Caco-2 (cell line): ENCODE measurements at regions of chr2 and their contacts with region 1.

Region 1: DNA sequence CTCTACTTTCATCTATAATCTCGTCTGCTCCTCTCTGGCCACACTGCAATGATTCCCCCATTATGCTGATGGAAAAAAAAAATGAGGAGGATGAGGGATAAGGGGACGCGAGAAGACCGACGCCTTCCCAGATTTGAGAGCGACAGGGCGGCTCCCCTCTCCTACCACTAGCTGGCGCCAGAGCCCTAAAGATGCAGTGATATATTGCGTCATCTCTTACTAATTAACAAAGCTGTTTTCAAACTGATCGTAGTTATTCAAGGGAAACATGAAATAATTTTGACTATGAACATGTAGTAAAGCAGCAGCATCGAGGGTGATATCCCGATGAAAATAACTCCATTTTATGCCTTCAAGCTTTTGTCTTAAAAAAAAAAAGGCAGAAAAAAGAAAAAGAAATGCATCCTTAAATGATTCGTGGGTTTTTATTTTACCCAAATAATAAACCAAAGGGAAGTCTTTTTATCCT is 48.0 kb upstream of the HNRNPA3 start:
- DNase-seq: peak; percentile 81 to 84
- H3K4me3 ChIP-seq: peak overlapping the region; percentile 22
- H3K4me3 Mint-ChIP-seq: no peak overlapping the region
- H3K27ac Mint-ChIP-seq: no peak overlapping the region
- H3K4me1 ChIP-seq: peaks cover 46% of the 10 kb centered on the region
- H3K4me1 Mint-ChIP-seq: peaks cover 22% of the 10 kb centered on the region
- H3K27me3 ChIP-seq: no peaks in the 10 kb centered on the region
- H3K27me3 Mint-ChIP-seq: peaks cover 4% of the 10 kb centered on the region
- CTCF ChIP-seq: peak; percentile 98 to 99

Region 2: GRCh38 chr2:176924909-176925534 is 239.6 kb before region 1 on chr2:
- CTCF ChIA-PET with region 1: no interaction called
- POLR2A ChIA-PET with region 1: no interaction called
- intact Hi-C with region 1: no loop called
- DNase-seq: no peak
- H3K4me3 ChIP-seq: no peak overlapping the region
- H3K4me3 Mint-ChIP-seq: no peak overlapping the region
- H3K27ac Mint-ChIP-seq: no peak overlapping the region
- H3K4me1 ChIP-seq: no peaks in the 10 kb centered on the region
- H3K4me1 Mint-ChIP-seq: no peaks in the 10 kb centered on the region
- H3K27me3 ChIP-seq: no peaks in the 10 kb centered on the region; the same call in 1 of the 2 replicates
- H3K27me3 Mint-ChIP-seq: peaks cover 9% of the 10 kb centered on the region
- CTCF ChIP-seq: no peak

Region 3: GRCh38 chr2:177124371-177124770 is 40.2 kb before region 1 on chr2:
- CTCF ChIA-PET with region 1: no interaction called
- POLR2A ChIA-PET with region 1: no interaction called
- intact Hi-C with region 1: no loop called
- DNase-seq: no peak
- H3K4me3 ChIP-seq: no peak overlapping the region
- H3K4me3 Mint-ChIP-seq: no peak overlapping the region
- H3K27ac Mint-ChIP-seq: no peak overlapping the region
- H3K4me1 ChIP-seq: no peaks in the 10 kb centered on the region
- H3K4me1 Mint-ChIP-seq: no peaks in the 10 kb centered on the region
- H3K27me3 ChIP-seq: no peaks in the 10 kb centered on the region; the same call in 1 of the 2 replicates
- H3K27me3 Mint-ChIP-seq: peaks cover 4% of the 10 kb centered on the region
- CTCF ChIP-seq: no peak

Region 4: DNA sequence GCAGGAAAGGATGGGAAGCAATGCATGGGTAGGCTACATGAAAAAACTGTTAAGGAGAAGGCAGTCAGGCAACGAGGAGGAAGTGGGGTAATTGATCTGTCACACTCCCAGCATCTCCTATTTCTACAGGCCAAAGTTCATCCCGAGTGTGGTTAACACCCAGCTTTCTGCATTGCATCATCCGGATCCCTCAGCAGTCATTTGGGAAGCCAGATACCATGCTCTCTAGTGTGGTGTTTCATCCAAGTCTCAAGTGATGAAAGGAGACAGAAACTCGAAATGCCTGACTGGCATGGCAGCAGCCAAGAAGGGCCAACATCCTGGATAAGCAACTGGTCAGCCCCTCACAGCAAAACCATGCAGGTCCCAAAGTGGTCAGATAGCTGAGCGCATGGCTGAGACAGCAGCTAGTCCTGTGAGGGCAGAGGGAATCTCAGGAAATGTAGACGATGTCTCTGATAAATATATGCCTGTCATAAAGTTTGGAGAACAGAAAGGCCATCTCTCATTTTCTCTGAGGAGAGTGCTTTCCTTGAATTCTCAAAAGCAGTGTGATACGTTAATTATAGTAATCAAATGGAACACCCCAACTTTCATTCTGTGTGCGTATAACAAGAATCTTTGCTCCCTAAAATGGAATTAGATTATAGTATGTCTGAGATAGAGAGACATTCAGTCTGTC is 23.2 kb after region 1 on chr2:
- CTCF ChIA-PET with region 1: interaction called, 6 read pairs
- POLR2A ChIA-PET with region 1: no interaction called
- intact Hi-C with region 1: loop called (anchors 1 kb)
- DNase-seq: peak; percentile 69 to 74
- H3K4me3 ChIP-seq: no peak overlapping the region
- H3K4me3 Mint-ChIP-seq: peak overlapping the region; percentile 23
- H3K27ac Mint-ChIP-seq: peak overlapping the region; percentile 75
- H3K4me1 ChIP-seq: peaks cover 35% of the 10 kb centered on the region
- H3K4me1 Mint-ChIP-seq: peaks cover 22% of the 10 kb centered on the region
- H3K27me3 ChIP-seq: no peaks in the 10 kb centered on the region
- H3K27me3 Mint-ChIP-seq: no peaks in the 10 kb centered on the region
- CTCF ChIP-seq: no peak

Region 5: GRCh38 chr2:177212106-177212890 is 47.7 kb after region 1 on chr2 and contains the start of gene HNRNPA3:
- CTCF ChIA-PET with region 1: interaction called, 4 read pairs
- POLR2A ChIA-PET with region 1: interaction called, 9 read pairs
- intact Hi-C with region 1: loop called (anchors 2 kb)
- DNase-seq: peak; percentile 99
- H3K4me3 ChIP-seq: peak within 1 kb of the TSS; percentile 72
- H3K4me3 Mint-ChIP-seq: peak within 1 kb of the TSS; percentile 87
- H3K27ac Mint-ChIP-seq: peak within 1 kb of the TSS; percentile 99
- H3K4me1 ChIP-seq: peaks cover 22% of the 10 kb centered on the region
- H3K4me1 Mint-ChIP-seq: peaks cover 8% of the 10 kb centered on the region
- H3K27me3 ChIP-seq: no peaks in the 10 kb centered on the region
- H3K27me3 Mint-ChIP-seq: no peaks in the 10 kb centered on the region
- CTCF ChIP-seq: peak in 1 of 2 experiments; percentile 37
- total RNA-seq, gene HNRNPA3: 322 and 332 TPM in 2 replicates

Region 6: GRCh38 chr2:177263451-177264208 is 99.0 kb after region 1 on chr2:
- CTCF ChIA-PET with region 1: interaction called, 44 read pairs
- POLR2A ChIA-PET with region 1: interaction called, 9 read pairs
- intact Hi-C with region 1: loop called (anchors 1 kb)
- DNase-seq: peak; percentile 98 to 99
- H3K4me3 ChIP-seq: peak overlapping the region; percentile 91
- H3K4me3 Mint-ChIP-seq: peak overlapping the region; percentile 97
- H3K27ac Mint-ChIP-seq: peak overlapping the region; percentile 91
- H3K4me1 ChIP-seq: peaks cover 40% of the 10 kb centered on the region
- H3K4me1 Mint-ChIP-seq: peaks cover 21% of the 10 kb centered on the region
- H3K27me3 ChIP-seq: no peaks in the 10 kb centered on the region
- H3K27me3 Mint-ChIP-seq: no peaks in the 10 kb centered on the region
- CTCF ChIP-seq: peak; percentile 83 to 95

Region 7: DNA sequence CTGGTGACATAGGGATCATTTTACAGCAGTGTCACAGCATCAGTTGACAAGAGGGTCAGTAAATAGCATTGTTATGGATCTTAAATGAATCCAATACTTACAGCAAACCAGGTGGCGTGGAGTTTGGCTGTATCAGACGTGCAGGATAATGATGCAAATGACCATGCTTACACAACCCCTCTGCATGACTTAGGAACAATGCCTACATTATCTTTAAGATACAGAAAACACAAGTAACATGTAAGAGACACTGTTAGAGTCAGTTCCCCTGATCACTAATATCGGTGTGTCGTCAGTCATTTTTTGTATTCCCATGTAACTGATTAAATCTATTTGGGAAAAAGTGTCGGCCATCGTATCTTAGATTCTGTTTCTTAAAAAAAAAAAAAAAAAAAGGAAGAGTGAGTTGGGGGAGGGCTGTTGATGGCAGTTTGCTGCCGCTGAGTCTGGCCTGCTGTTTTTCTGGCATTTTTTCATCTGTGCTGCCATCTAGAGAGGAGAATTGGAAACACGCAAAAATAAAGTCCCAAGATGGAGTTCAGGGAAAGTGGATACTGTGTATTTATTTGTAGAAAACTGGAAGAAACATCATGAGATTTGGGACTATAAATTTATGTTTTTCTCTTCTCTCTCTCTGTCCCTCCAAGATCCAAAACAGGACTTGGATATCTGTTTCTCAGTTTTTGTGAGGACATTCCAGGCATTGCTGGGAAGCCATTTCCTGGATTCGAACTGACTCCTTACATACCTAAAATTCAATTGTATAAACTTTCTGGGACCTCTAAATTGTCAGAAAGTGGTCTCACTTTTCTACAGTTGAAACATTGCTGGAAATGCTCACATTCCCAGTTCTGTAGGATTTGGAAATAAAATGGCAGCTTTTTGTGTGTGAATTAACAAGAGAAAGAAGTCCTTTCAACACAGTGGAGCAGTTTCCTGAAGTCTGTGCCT is 167.7 kb after region 1 on chr2:
- CTCF ChIA-PET with region 1: interaction called, 14 read pairs
- POLR2A ChIA-PET with region 1: no interaction called
- intact Hi-C with region 1: loop called (anchors 1 kb)
- DNase-seq: peak; percentile 63 to 74
- H3K4me3 ChIP-seq: no peak overlapping the region
- H3K4me3 Mint-ChIP-seq: no peak overlapping the region
- H3K27ac Mint-ChIP-seq: peak overlapping the region; percentile 26
- H3K4me1 ChIP-seq: peaks cover 35% of the 10 kb centered on the region
- H3K4me1 Mint-ChIP-seq: peaks cover 19% of the 10 kb centered on the region
- H3K27me3 ChIP-seq: no peaks in the 10 kb centered on the region
- H3K27me3 Mint-ChIP-seq: no peaks in the 10 kb centered on the region
- CTCF ChIP-seq: peak; percentile 66 to 69

Region 8: GRCh38 chr2:177604271-177605065 is 439.9 kb after region 1 on chr2:
- CTCF ChIA-PET with region 1: no interaction called
- POLR2A ChIA-PET with region 1: no interaction called
- intact Hi-C with region 1: loop called (anchors 2 kb)
- DNase-seq: peak; percentile 42 to 64
- H3K4me3 ChIP-seq: no peak overlapping the region
- H3K4me3 Mint-ChIP-seq: no peak overlapping the region
- H3K27ac Mint-ChIP-seq: no peak overlapping the region
- H3K4me1 ChIP-seq: peaks cover 22% of the 10 kb centered on the region
- H3K4me1 Mint-ChIP-seq: peaks cover 20% of the 10 kb centered on the region
- H3K27me3 ChIP-seq: no peaks in the 10 kb centered on the region
- H3K27me3 Mint-ChIP-seq: no peaks in the 10 kb centered on the region
- CTCF ChIP-seq: peak; percentile 68 to 76